Mammary epithelial cell (primary cell): ENCODE measurements at regions of chr6 and their contacts with region 1.

Region 1: GRCh38 chr6:102619585-102619984 is 1226.1 kb downstream of the GRIK2 start:
- DNase-seq: peak; percentile 3
- H3K4me3 ChIP-seq: no peak overlapping the region
- H3K27ac ChIP-seq: no peak overlapping the region
- H3K4me1 ChIP-seq: no peaks in the 10 kb centered on the region
- H3K27me3 ChIP-seq: no peaks in the 10 kb centered on the region
- CTCF ChIP-seq: peak; percentile 63 to 65

Region 2: GRCh38 chr6:102114402-102114801 is 505.2 kb before region 1 on chr6:
- CTCF ChIA-PET with region 1: no interaction called
- dilution Hi-C with region 1: no loop called
- in situ Hi-C with region 1: no loop called
- intact Hi-C with region 1: loop called (anchors 1 kb)
- DNase-seq: peak; percentile 3
- H3K4me3 ChIP-seq: no peak overlapping the region
- H3K27ac ChIP-seq: no peak overlapping the region
- H3K4me1 ChIP-seq: no peaks in the 10 kb centered on the region
- H3K27me3 ChIP-seq: no peaks in the 10 kb centered on the region
- CTCF ChIP-seq: peak; percentile 43 to 64

Region 3: GRCh38 chr6:102273686-102274085 is 345.9 kb before region 1 on chr6:
- CTCF ChIA-PET with region 1: no interaction called
- dilution Hi-C with region 1: no loop called
- in situ Hi-C with region 1: no loop called
- intact Hi-C with region 1: loop called (anchors 1 kb)
- DNase-seq: no peak
- H3K4me3 ChIP-seq: no peak overlapping the region
- H3K27ac ChIP-seq: no peak overlapping the region
- H3K4me1 ChIP-seq: no peaks in the 10 kb centered on the region
- H3K27me3 ChIP-seq: no peaks in the 10 kb centered on the region
- CTCF ChIP-seq: peak in 1 of 2 donors; percentile 31

Region 4: GRCh38 chr6:103122766-103123601 is 503.4 kb after region 1 on chr6:
- CTCF ChIA-PET with region 1: no interaction called
- dilution Hi-C with region 1: no loop called
- in situ Hi-C with region 1: no loop called
- intact Hi-C with region 1: loop called (anchors 2 kb)
- DNase-seq: peak; percentile 25
- H3K4me3 ChIP-seq: no peak overlapping the region
- H3K27ac ChIP-seq: no peak overlapping the region
- H3K4me1 ChIP-seq: no peaks in the 10 kb centered on the region
- H3K27me3 ChIP-seq: no peaks in the 10 kb centered on the region
- CTCF ChIP-seq: peak; percentile 63 to 80